ENCODE measurements at regions of chr15 and their contacts with region 1.

Region 1: DNA sequence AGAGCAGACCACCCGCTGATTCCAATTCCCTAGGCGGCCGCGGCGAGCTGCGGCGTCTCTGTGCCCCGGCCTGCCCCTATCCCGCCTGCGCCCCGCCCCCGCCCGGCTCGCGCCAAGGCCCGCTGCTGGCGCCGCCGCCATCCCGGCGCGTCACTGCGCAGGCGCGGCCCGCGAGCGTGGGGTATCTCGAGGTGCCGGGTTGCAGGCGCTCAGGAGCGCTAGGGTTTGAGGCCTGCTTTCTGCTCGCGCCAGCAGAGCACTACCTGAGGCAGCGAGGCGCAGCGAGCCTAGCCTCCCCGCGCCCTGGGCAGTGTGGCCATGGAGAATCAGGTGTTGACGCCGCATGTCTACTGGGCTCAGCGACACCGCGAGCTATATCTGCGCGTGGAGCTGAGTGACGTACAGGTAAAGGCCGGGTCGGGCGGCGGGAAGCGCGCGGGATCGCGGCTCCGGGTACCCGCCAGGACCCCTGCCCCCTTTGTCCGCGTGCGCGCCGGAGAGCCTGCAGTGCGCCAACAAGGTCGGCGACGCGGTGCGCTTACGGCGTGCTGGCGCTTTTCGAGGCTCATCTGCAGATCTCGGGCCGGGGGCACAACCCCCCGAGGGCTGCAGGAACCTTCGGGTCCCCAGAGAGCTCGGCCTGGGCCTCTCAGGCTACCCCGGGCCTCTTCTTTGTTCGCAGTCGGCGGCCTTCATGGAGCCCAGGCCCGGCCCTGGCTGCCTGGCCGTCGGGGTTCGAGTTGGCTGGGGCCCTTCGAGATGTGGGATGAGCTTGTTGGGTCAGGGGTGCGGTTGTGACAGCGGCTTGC is at the start of gene HACD3:
- DNase-seq: peak; percentile 67 to 93 (median 82)
- H3K4me3 ChIP-seq: peak within 1 kb of the TSS; percentile 52 to 100 (median 94)
- H3K27ac ChIP-seq: peak within 1 kb of the TSS in 58 of 59 donors; percentile 9 to 93 (median 78)
- H3K27me3 ChIP-seq: no peaks in the 10 kb centered on the region
- CTCF ChIP-seq: peak in 36 of 56 donors; percentile 3 to 64 (median 34)
- total RNA-seq, gene HACD3: 71.7 to 121 (median 99.9) TPM

Region 2: GRCh38 chr15:65517866-65518207 is 12.7 kb before region 1 on chr15:
- intact Hi-C with region 1: loop called in 1 of 2 experiments (anchors 1 kb)
- DNase-seq: no peak
- H3K4me3 ChIP-seq: peak overlapping the region in 57 of 59 donors; percentile 66 to 100 (median 97)
- H3K27ac ChIP-seq: peak overlapping the region in 56 of 59 donors; percentile 37 to 98 (median 94)
- H3K27me3 ChIP-seq: no peaks in the 10 kb centered on the region
- CTCF ChIP-seq: peak in 12 of 56 donors; percentile 0 to 50 (median 13)

Region 3: DNA sequence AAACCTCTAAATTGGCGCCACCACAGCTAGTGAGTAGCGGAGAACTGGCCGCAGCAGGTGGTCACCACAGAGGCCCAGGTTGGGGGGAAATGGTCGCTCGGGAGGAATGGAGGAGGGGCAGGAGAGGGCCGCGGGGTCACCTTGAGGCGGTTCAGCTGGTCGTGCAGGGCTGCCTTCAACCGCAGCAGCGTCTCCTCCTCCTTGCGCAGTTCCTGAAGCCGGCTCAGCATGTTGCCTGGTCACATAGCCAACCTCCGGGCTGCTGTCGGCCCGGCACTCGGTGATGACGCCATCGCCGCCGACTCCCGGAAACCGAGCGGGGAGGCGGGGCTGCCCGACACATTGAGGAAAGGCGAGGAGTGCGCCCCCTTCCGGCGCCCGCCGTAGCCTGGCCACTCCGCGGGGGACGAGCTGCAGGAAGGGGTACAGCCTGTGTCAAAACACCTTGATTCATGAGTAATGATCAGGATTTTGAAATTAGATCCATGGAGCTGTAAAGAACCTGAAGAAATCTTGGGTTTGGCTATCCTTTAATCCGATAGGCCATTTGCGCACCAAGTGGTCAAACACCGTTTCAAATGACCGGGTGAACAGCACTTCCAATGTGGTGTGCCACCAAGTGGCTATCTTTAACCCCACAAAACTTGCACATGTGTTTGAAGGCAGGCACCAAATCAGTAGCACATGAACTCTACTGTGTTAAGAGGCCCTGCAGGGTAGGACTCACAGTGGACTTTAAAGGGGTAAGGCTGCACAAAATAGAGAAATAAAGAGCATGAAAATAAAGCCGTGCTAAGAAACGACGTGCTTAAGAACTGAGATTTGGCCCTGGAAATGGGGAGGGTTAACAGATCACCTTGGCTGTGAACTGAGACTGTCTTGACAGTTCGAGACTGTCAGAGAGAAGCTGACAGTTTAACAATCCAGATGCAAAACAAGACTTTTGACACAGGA is 967.3 kb after region 1 on chr15 and contains the start of gene SNAPC5:
- intact Hi-C with region 1: loop called in 1 of 2 experiments (anchors 10 kb)
- DNase-seq: peak; percentile 94 to 97 (median 96)
- H3K4me3 ChIP-seq: peak within 1 kb of the TSS; percentile 47 to 99 (median 93)
- H3K27ac ChIP-seq: peak within 1 kb of the TSS in 58 of 59 donors; percentile 38 to 96 (median 84)
- H3K27me3 ChIP-seq: no peaks in the 10 kb centered on the region
- CTCF ChIP-seq: peak; percentile 98 to 100 (median 99)
- total RNA-seq, gene SNAPC5: 18.3 to 49.0 (median 32.9) TPM